H1 (cell line): ENCODE measurements at regions of chr18 and their contacts with region 1.

Region 1: GRCh38 chr18:59988098-59988706 is 88.4 kb downstream of the PMAIP1 start:
- DNase-seq: no peak
- H3K4me3 ChIP-seq: no peak overlapping the region
- H3K27ac ChIP-seq: no peak overlapping the region
- H3K4me1 ChIP-seq: no peaks in the 10 kb centered on the region
- H3K27me3 ChIP-seq: no peaks in the 10 kb centered on the region
- CTCF ChIP-seq: peak in 2 of 3 experiments; percentile 72 to 76; a peak in 3 of 4 replicates
- EP300 ChIP-seq: no peak
- POLR2A ChIP-seq: no peak
- RAD21 ChIP-seq: peak; percentile 91 to 93

Region 2: DNA sequence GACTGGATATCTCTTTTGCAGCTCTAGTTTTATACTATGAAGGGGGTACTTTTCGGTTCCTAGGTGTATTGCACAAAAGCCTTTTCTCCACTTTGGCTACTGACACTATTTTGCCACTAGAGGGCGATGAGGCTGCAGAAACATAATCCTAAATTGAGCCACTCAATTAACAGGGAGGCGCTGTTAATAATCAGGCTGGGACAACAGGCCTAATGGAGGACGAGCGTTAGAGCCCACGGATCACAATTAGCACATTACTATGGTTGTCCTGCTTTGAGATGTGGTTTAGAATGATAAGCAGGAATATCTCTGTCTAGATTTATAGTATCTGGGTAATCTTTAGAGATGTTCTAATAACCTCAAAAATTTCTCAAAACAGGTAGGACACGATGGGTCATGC is 150.6 kb before region 1 on chr18:
- CTCF ChIA-PET with region 1: interaction called, 10 read pairs
- POLR2A ChIA-PET with region 1: no interaction called
- DNase-seq: peak in 1 of 2 experiments; percentile 36
- H3K4me3 ChIP-seq: no peak overlapping the region
- H3K27ac ChIP-seq: no peak overlapping the region
- H3K4me1 ChIP-seq: peaks cover 0 to 15% (median 7%) of the 10 kb centered on the region in 4 experiments; a peak in 5 of 7 replicates
- H3K27me3 ChIP-seq: no peaks in the 10 kb centered on the region
- CTCF ChIP-seq: peak in 2 of 3 experiments; percentile 85 to 90; a peak in 3 of 4 replicates
- EP300 ChIP-seq: 0 out of 3 replicates have a peak, but pooled peaks of 1 of the 2 experiments have one; percentile 45
- POLR2A ChIP-seq: no peak
- RAD21 ChIP-seq: peak; percentile 86 to 93

Region 3: DNA sequence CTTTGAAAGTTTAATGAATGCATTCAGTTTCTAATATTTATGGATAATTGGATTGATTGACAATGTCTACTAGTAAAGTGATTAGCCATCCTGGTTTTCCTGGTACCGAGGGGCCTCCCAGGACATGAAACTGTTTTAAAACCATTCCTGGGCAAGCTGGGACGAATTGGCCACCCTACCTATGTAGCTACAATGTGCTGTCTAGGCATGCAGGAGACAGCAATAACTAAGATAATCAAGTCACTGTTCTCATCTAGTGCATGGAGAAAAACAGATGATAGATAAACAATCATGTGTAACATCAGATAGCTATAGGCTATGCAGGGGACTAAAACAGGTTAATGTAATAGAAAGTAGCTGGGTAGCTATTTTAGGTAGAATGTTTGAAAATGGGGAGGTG is 21.3 kb before region 1 on chr18:
- CTCF ChIA-PET with region 1: interaction called, 10 read pairs
- POLR2A ChIA-PET with region 1: no interaction called
- DNase-seq: no peak
- H3K4me3 ChIP-seq: no peak overlapping the region
- H3K27ac ChIP-seq: no peak overlapping the region
- H3K4me1 ChIP-seq: no peaks in the 10 kb centered on the region
- H3K27me3 ChIP-seq: no peaks in the 10 kb centered on the region
- CTCF ChIP-seq: no peak
- EP300 ChIP-seq: no peak
- POLR2A ChIP-seq: no peak
- RAD21 ChIP-seq: no peak

Region 4: DNA sequence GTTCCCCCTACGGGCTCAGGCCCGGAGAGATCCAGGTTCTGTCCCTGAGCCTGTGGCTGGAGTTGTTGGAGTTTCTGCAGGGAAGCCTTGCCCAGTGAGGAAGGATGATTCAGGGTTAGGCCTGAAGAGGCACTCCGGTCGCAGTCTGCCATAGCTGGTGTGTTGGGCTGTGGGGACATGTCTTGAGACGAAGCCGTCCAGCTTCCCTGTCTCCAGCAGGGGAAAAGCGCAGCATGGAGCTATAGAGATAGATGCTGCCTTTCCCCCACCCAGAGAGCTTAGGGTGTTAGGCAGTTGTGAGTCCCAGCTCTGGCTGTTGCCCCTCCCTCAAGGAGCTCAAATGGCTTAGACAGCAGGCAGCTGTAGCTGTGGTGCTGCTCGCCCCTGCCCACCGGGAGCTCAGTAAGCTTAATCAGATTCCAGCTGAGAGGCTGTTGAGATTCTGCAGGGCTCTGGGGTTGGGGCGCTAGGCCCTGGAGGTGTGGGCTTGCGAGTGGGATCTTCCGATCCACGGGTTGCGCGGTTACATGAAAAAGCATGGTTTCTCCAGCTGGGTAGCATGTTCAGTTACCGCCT is 15.5 kb after region 1 on chr18:
- CTCF ChIA-PET with region 1: interaction called, 11 read pairs
- POLR2A ChIA-PET with region 1: no interaction called
- DNase-seq: no peak
- H3K4me3 ChIP-seq: no peak overlapping the region
- H3K27ac ChIP-seq: no peak overlapping the region
- H3K4me1 ChIP-seq: peaks cover 0 to 2% (median 0%) of the 10 kb centered on the region in 4 experiments; a peak in 1 of 7 replicates
- H3K27me3 ChIP-seq: no peaks in the 10 kb centered on the region
- CTCF ChIP-seq: no peak
- EP300 ChIP-seq: no peak
- POLR2A ChIP-seq: no peak
- RAD21 ChIP-seq: peak in 1 of 2 experiments; percentile 7; a peak in 2 of 4 replicates

Region 5: DNA sequence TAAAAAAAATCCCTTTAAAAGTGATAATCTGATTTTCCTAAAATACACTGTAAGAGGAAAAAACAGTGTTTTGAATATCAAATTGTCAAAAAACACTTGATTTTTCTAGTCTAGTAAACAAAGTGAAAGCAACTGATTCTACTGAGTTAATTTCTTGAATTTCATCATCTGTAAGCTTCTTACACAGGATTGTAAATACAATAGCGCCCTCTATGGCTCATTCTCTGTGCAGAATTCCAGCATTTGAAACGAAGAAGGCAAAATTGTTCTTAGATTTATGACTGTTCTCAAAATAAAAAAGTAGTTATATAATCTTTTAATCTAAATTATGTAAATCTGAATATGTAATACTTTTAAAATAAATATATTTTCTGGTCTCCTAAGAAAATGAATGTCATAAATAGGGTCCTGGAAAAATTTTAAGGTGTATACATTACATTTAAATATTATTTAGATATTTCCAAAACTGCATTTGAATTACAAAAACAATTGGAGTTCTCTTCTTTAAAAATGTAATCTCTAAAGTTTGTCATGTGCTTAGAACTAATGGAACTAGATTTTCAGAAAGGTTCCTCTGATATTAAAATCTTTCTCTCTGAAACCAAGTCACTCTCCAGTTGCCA is 561.2 kb after region 1 on chr18:
- CTCF ChIA-PET with region 1: interaction called, 12 read pairs
- POLR2A ChIA-PET with region 1: no interaction called
- DNase-seq: peak in 1 of 2 experiments; percentile 15
- H3K4me3 ChIP-seq: no peak overlapping the region
- H3K27ac ChIP-seq: no peak overlapping the region
- H3K4me1 ChIP-seq: no peaks in the 10 kb centered on the region
- H3K27me3 ChIP-seq: no peaks in the 10 kb centered on the region
- CTCF ChIP-seq: peak in 2 of 3 experiments; percentile 41 to 65; a peak in 2 of 4 replicates
- EP300 ChIP-seq: no peak
- POLR2A ChIP-seq: no peak
- RAD21 ChIP-seq: peak; percentile 80 to 88